ENCODE measurements at regions of chr2 and their contacts with region 1.

Region 1: GRCh38 chr2:57516698-57517340 is 529.8 kb upstream of the VRK2 start:
- DNase-seq: peak; percentile 70
- ATAC-seq: 0 out of 2 replicates have a peak, but pooled peaks have one; percentile 53
- H3K4me3 ChIP-seq: no peak overlapping the region
- H3K27ac ChIP-seq: no peak overlapping the region
- H3K4me1 ChIP-seq: peaks cover 5% of the 10 kb centered on the region
- H3K27me3 ChIP-seq: peaks cover 28% of the 10 kb centered on the region
- CTCF ChIP-seq: peak; percentile 74

Region 2: GRCh38 chr2:56077352-56077915 is 1439.4 kb before region 1 on chr2:
- CTCF ChIA-PET with region 1: no interaction called
- POLR2A ChIA-PET with region 1: no interaction called
- intact Hi-C with region 1: loop called (anchors 2 kb)
- DNase-seq: peak; percentile 68
- ATAC-seq: peak; percentile 49; the same call in 1 of the 2 replicates
- H3K4me3 ChIP-seq: no peak overlapping the region
- H3K27ac ChIP-seq: no peak overlapping the region
- H3K4me1 ChIP-seq: no peaks in the 10 kb centered on the region
- H3K27me3 ChIP-seq: peaks cover 48% of the 10 kb centered on the region
- CTCF ChIP-seq: peak; percentile 84

Measured in PC-3 (cell line).